MCF 10A (cell line): ENCODE measurements at regions of chr12 and their contacts with region 1.

Region 1: GRCh38 chr12:13196130-13196921 is at the start of gene EMP1:
- DNase-seq: peak; percentile 99
- H3K4me3 Mint-ChIP-seq: peak within 1 kb of the TSS; percentile 79
- H3K27ac Mint-ChIP-seq: peak within 1 kb of the TSS; percentile 82
- H3K4me1 Mint-ChIP-seq: peaks cover 51% of the 10 kb centered on the region
- H3K27me3 Mint-ChIP-seq: no peaks in the 10 kb centered on the region
- CTCF ChIP-seq: no peak
- total RNA-seq, gene EMP1: 193 and 230 TPM in 2 replicates

Region 2: DNA sequence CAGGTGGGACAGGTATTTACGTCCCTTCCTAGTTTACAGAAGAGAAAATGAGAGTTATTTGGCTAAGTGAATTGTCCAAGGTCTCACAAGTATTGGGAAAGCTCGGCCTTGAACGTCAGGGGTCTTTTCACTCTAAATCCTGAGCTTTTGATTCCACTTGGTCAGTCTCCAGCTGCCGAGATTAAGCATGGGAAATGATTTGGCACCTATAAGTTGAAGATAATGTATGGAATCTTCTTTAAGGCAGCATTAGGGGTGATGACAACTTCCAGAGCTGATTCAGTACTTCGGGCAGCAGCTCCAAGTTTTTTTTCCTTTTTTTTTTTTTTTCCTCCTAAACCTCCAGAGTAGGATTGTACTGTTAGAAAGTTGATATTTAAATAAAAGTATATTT is 151.4 kb before region 1 on chr12:
- CTCF ChIA-PET with region 1: no interaction called
- POLR2A ChIA-PET with region 1: no interaction called
- intact Hi-C with region 1: no loop called
- DNase-seq: peak; percentile 3
- H3K4me3 Mint-ChIP-seq: peak overlapping the region; percentile 85
- H3K27ac Mint-ChIP-seq: peak overlapping the region; percentile 82
- H3K4me1 Mint-ChIP-seq: peaks cover 7% of the 10 kb centered on the region
- H3K27me3 Mint-ChIP-seq: no peaks in the 10 kb centered on the region
- CTCF ChIP-seq: no peak

Region 3: DNA sequence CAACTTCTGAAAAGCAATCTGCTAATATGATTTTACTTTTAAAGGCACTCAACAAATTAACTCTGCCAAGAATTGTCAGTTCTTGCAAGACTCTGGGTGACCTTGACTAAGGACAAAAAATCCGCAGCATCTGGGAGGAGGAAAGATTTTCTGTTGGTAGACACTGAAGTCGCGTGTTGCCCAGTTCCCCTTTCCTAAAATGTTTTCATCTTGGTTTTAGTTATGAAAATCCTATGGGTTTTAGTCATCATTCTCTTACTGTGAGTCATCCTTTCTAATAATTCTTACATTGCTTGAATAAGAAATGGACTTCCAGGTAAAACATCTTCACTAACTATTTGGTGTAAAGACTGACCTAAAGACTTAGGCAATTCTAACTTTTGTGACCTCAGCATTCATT is 102.0 kb before region 1 on chr12:
- CTCF ChIA-PET with region 1: interaction called, 7 read pairs
- POLR2A ChIA-PET with region 1: interaction called, 255 read pairs
- intact Hi-C with region 1: loop called (anchors 1 kb)
- DNase-seq: peak; percentile 40
- H3K4me3 Mint-ChIP-seq: peak overlapping the region; percentile 26
- H3K27ac Mint-ChIP-seq: peak overlapping the region; percentile 80
- H3K4me1 Mint-ChIP-seq: peaks cover 47% of the 10 kb centered on the region
- H3K27me3 Mint-ChIP-seq: no peaks in the 10 kb centered on the region
- CTCF ChIP-seq: no peak

Region 4: GRCh38 chr12:13165617-13166041 is 30.7 kb before region 1 on chr12:
- CTCF ChIA-PET with region 1: interaction called, 3 read pairs
- POLR2A ChIA-PET with region 1: interaction called, 62 read pairs
- intact Hi-C with region 1: no loop called
- DNase-seq: peak; percentile 98
- H3K4me3 Mint-ChIP-seq: no peak overlapping the region
- H3K27ac Mint-ChIP-seq: peak overlapping the region; percentile 60
- H3K4me1 Mint-ChIP-seq: peaks cover 25% of the 10 kb centered on the region
- H3K27me3 Mint-ChIP-seq: no peaks in the 10 kb centered on the region
- CTCF ChIP-seq: no peak

Region 5: GRCh38 chr12:13173012-13173932 is 23.1 kb before region 1 on chr12:
- CTCF ChIA-PET with region 1: interaction called, 6 read pairs
- POLR2A ChIA-PET with region 1: interaction called, 364 read pairs
- intact Hi-C with region 1: loop called (anchors 1 kb)
- DNase-seq: peak; percentile 80
- H3K4me3 Mint-ChIP-seq: peak overlapping the region; percentile 53
- H3K27ac Mint-ChIP-seq: peak overlapping the region; percentile 90
- H3K4me1 Mint-ChIP-seq: peaks cover 52% of the 10 kb centered on the region
- H3K27me3 Mint-ChIP-seq: no peaks in the 10 kb centered on the region
- CTCF ChIP-seq: no peak